CD8-positive, alpha-beta memory T cell (primary cell): ENCODE measurements at regions of chr13 and their contacts with region 1.

Region 1: DNA sequence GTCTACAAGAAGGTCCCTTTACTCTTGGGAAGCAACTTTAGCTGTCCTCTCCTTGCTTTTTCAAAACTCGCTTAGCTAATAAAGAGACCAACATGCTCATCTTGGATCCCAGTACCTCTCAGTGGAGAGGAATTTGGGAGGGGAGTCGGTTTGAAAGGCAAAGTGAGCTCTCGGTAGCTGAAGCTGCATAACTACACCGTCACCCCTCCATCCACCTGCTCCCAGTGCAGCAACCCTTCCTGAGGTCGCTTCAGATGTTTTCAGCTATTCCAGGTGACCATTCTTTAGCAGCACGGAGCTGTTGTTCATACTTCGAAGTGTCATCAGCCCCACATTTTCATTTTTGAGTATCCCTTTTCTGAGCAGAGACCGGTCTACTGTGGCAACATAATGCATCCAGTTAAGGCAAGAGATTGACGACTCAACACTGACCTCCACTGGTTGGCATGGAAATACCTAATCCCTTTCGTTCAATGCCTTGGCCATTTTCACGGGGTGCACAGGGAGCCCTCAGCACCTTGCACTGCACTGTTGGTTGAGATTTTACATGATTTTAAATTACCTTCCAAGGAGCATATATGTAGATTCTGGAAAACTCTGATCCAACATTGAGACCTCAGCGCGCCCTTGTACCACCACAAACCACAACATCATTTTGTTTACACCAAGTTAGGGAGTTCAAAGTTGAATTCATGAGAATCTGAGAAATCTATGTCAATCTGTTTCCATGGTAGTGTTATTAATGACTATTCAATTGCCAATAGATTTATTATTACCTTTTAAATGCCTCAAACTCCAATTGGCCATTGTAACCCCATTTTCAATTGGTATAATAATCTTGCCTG is 42.2 kb downstream of the DLEU7 start:
- DNase-seq: peak; percentile 29 to 69 (median 52)
- H3K4me3 ChIP-seq: no peak overlapping the region
- H3K4me3 Mint-ChIP-seq: no peak overlapping the region
- H3K27ac ChIP-seq: no peak overlapping the region
- H3K27ac Mint-ChIP-seq: peak overlapping the region in 1 of 8 donors; percentile 70
- H3K4me1 ChIP-seq: no peaks in the 10 kb centered on the region
- H3K4me1 Mint-ChIP-seq: peaks cover 5 to 8% (median 7%) of the 10 kb centered on the region in 3 donors
- H3K27me3 ChIP-seq: no peaks in the 10 kb centered on the region
- H3K27me3 Mint-ChIP-seq: peaks cover 0 to 2% of the 10 kb centered on the region in 2 donors

Region 2: DNA sequence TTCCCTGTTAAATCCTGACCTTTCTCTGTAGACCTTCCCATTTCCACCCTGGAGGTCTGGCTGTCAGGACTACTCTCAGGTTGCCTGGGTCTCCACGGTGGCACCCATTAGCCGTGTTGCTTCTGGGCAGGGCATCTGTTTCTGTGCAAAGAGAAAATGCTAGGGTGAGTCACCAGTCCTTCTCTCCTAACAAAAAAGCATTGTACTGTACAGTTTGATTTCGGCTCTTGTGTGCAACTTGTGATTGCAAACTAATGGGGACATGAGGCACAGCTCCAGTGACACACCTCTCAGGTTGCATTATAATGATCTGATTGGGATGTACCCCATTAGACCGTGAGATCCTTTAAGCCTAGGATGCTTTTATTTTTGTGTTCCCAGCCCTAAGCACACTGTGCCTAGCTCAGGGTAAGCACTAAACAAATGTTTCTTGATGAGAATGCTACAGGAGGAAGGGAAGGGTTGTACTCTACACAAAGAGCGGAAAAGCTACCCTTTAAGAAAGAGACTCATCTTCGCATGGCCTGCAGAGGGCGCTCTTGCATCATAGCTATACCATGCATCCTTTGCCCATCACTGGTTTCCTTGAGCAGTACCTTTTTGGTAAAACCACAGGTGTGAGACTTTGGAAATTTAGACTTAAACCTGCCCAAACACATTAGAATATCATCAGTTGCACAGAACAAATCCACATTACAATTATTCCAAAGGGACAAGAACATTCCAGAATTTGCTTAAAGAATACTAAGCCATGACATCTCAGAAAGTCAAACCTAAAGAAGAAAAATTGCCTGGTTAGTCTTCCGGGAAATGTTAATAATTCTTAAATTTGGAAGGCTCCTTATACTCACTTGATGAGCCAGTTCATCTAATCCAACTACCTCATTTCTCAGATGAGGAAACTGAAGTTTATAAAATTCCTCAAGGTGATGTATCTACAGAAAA is 824.7 kb before region 1 on chr13:
- CTCF ChIA-PET with region 1: interaction called, 23 read pairs
- POLR2A ChIA-PET with region 1: no interaction called
- DNase-seq: peak; percentile 61 to 81 (median 69)
- H3K4me3 ChIP-seq: no peak overlapping the region
- H3K4me3 Mint-ChIP-seq: no peak overlapping the region
- H3K27ac ChIP-seq: no peak overlapping the region
- H3K27ac Mint-ChIP-seq: peak overlapping the region in 2 of 8 donors; percentile 18 to 21
- H3K4me1 ChIP-seq: no peaks in the 10 kb centered on the region
- H3K4me1 Mint-ChIP-seq: peaks cover 2 to 5% (median 5%) of the 10 kb centered on the region in 3 donors
- H3K27me3 ChIP-seq: no peaks in the 10 kb centered on the region
- H3K27me3 Mint-ChIP-seq: no peaks in the 10 kb centered on the region